Spleen (tissue), 13 donors: ENCODE measurements at regions of chr20 and their contacts with region 1.

Region 1: DNA sequence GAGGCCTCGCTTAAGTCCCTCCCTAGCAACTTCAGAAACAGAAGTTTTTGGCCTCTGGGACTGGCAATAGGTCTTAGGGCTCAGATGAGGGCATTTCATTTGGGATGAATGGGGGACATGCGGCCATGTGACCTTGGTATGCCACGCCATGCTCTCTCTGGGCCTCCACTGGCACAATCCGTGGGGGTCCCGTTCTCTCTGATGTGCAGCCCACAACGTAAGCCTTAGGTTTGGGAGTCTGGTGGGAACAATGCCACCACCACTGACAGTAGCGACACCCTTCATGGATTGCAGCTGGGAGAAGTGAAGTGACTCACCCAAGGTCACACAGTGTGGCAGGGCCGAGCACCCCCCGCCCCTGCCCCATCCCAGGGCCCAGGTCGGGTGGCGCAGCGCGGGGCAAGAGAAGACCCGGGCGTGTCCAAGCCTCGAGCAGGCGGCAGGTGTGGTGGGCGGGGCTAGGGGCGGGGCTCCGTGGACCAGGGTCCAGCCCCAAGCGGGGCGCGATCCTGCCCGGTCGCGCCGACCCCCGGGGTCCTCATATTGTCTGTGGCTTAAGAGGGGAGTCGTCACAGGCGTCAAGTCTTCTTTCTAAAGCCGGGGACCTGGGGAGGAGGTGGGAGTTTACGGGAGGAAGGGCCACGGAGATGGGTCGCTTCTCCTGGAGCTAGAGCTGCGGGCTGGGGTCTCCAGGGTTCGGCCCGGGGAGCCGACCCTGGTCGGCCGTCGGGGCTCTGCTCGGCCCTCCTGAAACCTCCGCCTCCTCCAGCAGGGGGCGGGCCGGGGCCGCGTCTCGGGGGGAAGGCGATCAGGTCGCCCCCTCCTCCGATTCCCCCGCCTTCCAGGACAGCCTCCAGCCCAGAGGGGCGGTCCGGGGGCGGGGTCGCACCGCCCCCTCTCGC is 698 bp upstream of the CEBPB start:
- DNase-seq: peak; percentile 98
- H3K4me3 ChIP-seq: peak overlapping the region; percentile 68 to 90 (median 84)
- H3K27ac ChIP-seq: peak overlapping the region; percentile 95 to 100 (median 98)
- H3K4me1 ChIP-seq: peaks cover 17 to 74% (median 40%) of the 10 kb centered on the region in 6 donors
- H3K27me3 ChIP-seq: peaks cover 0 to 12% (median 0%) of the 10 kb centered on the region in 7 donors
- CTCF ChIP-seq: peak; percentile 62 to 96 (median 88)
- POLR2A ChIP-seq: no peak

Region 2: DNA sequence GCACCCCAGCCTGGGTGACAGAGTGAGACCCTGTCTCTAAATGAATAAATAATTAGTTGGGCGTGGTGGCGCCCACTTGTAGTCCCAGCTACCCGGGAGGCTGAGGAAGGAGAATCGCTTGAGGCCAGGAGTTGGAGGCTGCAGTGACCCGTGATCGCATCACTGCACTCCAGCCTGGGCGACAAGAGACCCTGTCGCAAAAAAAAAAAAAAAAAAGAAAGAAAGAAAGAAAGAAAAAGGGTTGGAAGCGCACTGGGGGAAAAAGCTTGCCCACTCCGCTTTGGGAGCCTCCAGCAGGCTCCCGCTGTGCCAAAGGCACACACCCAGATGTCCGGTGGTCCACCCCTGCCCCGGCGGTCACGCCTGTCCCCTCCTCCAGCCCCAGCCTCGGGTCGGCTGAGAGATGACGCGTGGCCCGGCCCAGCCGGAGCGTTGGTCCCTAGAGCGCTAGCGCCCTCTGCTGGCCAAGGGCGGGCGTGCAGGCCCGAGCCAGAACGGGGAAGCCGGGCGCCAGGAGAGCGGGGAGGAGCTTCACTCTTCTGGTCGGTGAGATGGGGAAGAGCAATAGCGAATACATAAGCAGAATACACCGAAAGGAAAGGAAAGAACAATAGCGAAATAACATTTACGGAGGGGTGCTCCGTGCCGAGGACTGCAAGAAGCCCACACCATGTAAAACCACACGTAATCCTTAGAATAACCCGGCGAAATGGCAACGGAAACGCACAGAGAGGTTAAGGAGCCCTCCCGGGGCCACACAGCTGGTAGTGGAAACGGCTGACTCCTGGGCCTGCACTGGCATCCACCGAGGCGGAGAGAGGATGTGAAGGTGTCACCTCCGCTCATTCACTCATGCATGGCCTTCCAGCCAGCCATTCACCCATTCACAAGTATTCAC is 118.7 kb before region 1 on chr20:
- intact Hi-C with region 1: no loop called
- DNase-seq: peak; percentile 99
- H3K4me3 ChIP-seq: peak overlapping the region in 6 of 8 donors; percentile 19 to 52 (median 24)
- H3K27ac ChIP-seq: peak overlapping the region in 3 of 8 donors; percentile 11 to 46 (median 34)
- H3K4me1 ChIP-seq: peaks cover 0 to 29% (median 17%) of the 10 kb centered on the region in 6 donors
- H3K27me3 ChIP-seq: no peaks in the 10 kb centered on the region
- CTCF ChIP-seq: peak; percentile 100
- POLR2A ChIP-seq: no peak

Region 3: GRCh38 chr20:50278674-50279531 is 89.0 kb after region 1 on chr20:
- intact Hi-C with region 1: loop called (anchors 10 kb)
- DNase-seq: peak; percentile 80
- H3K4me3 ChIP-seq: peak overlapping the region in 3 of 8 donors; percentile 28 to 66 (median 36)
- H3K27ac ChIP-seq: peak overlapping the region in 7 of 8 donors; percentile 36 to 95 (median 90)
- H3K4me1 ChIP-seq: peaks cover 0 to 91% (median 49%) of the 10 kb centered on the region in 6 donors
- H3K27me3 ChIP-seq: peaks cover 0 to 19% (median 0%) of the 10 kb centered on the region in 7 donors
- CTCF ChIP-seq: peak in 6 of 11 experiments; percentile 27 to 52 (median 37)
- POLR2A ChIP-seq: no peak

Region 4: DNA sequence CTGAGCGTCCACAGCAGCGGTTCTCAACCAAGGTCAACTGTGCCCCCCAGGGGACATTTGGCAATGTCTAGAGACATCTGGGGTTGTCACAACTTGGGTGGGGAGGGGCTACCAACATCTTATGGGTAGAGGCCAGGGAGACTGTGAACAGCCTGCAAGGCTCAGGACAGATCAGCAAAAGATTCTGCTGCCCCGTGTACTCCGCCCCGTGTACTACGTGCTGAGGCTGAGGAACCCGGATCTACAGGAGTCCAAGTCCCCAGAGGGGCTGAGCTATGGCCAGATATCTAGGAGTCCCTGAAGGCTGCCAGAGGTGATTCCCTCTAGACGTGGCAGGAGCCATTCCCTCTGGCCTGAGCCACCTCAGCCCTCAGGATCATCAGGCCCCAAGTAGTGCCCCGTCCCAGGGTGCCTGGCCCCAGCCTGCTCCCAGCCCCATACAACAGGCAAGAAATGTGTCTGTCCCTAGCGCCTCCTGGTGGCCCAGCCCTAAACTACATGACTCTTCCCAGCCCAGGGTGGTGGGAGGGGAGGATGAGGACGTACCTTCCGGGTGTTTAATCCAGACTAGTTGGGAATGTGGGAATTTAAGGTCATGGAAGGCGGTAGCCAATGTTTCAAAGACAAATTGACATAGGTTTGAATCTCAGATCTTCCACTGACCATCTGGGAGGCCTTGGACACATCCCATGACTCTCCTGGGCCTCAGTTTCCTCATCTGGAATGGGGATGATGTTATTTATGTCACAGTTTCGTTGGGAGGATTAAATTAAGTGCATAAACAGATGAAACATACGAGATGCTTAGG is 270.7 kb after region 1 on chr20:
- intact Hi-C with region 1: loop called (anchors 2 kb)
- DNase-seq: peak; percentile 95
- H3K4me3 ChIP-seq: no peak overlapping the region
- H3K27ac ChIP-seq: peak overlapping the region in 5 of 8 donors; percentile 16 to 71 (median 37)
- H3K4me1 ChIP-seq: peaks cover 0 to 55% (median 24%) of the 10 kb centered on the region in 6 donors
- H3K27me3 ChIP-seq: peaks cover 0 to 19% (median 0%) of the 10 kb centered on the region in 7 donors
- CTCF ChIP-seq: peak; percentile 85 to 98 (median 94)
- POLR2A ChIP-seq: peak in 1 of 3 donors; percentile 13

Region 5: DNA sequence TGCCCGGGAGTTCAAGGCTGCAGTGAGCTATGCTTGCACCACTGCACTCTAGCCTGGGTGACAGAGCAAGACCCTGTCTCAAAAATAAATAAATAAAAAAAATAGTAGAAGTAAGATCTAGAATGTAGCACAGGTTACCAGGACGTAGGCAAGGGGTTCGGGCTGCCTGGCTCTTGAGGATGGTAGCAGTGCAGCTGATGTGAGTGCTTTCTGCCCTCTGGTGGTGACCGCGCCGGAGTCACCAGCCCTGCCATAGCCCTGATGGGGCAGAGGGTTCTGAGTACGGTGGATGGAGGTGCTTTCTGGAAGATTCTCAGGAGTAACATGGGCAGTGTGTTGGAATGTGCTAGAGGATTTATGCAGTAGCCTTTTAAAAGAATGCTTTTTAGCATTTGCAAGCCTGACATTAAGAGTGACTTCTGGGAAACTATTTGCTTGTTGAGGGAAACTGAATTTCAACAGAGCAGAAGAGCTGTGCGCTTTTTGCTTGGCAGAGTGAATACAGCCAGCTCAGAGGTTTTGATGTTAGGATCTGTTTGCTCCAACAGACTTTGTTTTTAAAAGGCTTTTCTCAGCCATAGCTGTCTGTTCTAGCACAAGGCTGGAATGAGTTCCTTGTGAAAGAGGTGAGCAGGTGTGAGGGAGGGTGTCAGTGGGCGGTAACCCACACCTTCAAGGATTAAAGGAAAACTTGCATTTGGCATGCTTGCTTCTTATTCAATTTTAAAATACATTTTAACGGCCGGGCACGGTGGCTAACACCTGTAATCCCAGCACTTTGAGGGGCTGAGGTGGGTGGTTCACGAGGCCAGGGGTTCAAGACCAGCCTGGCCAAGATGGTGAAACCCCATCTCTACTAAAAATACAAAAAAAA is 386.2 kb after region 1 on chr20:
- intact Hi-C with region 1: loop called (anchors 5 kb)
- DNase-seq: peak; percentile 88
- H3K4me3 ChIP-seq: no peak overlapping the region
- H3K27ac ChIP-seq: peak overlapping the region in 2 of 8 donors; percentile 4 to 23
- H3K4me1 ChIP-seq: peaks cover 14 to 69% (median 40%) of the 10 kb centered on the region in 6 donors
- H3K27me3 ChIP-seq: no peaks in the 10 kb centered on the region
- CTCF ChIP-seq: peak; percentile 39 to 86 (median 77)
- POLR2A ChIP-seq: no peak